GM12878 (cell line): ENCODE measurements at regions of chr2 and their contacts with region 1.

Region 1: GRCh38 chr2:218168635-218169462 is 2.1 kb upstream of the CXCR1 start:
- DNase-seq: no peak
- ATAC-seq: peak; percentile 98
- H3K4me3 ChIP-seq: no peak overlapping the region
- H3K27ac ChIP-seq: no peak overlapping the region
- H3K4me1 ChIP-seq: no peaks in the 10 kb centered on the region
- H3K27me3 ChIP-seq: no peaks in the 10 kb centered on the region; a peak in 3 of 4 replicates
- CTCF ChIP-seq: peak; percentile 58 to 86 (median 70)
- EP300 ChIP-seq: no peak
- POLR2A ChIP-seq: no peak
- RAD21 ChIP-seq: peak; percentile 57

Region 2: DNA sequence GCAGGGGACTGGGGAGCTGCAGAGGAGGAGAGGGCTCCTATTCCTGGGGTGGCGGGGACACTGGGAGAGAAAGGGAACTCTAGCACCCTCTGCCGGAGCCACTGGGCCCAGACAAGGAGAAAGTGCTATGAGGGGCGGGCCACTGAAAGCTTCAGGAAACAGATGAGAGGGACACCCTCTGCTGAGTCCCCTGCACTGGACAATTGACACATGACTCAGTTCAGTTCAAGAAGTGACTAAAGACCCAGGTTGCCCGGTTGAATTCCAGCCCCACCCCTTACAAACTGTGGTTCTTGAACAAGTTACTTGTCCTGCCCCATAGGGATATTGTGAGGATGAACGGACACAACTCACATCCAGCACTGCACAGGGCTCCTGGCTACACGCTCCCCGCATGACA is 94.8 kb before region 1 on chr2:
- CTCF ChIA-PET with region 1: no interaction called
- POLR2A ChIA-PET with region 1: no interaction called
- RAD21 ChIA-PET with region 1: no interaction called
- SMC1A ChIA-PET with region 1: no interaction called
- in situ Hi-C with region 1: no loop called
- intact Hi-C with region 1: loop called (anchors 5 kb)
- DNase-seq: no peak
- ATAC-seq: peak; percentile 62
- H3K4me3 ChIP-seq: no peak overlapping the region
- H3K27ac ChIP-seq: no peak overlapping the region
- H3K4me1 ChIP-seq: peaks cover 4% of the 10 kb centered on the region; the same call in 1 of the 2 replicates
- H3K27me3 ChIP-seq: no peaks in the 10 kb centered on the region
- CTCF ChIP-seq: peak; percentile 46 to 68 (median 60)
- EP300 ChIP-seq: no peak
- POLR2A ChIP-seq: no peak
- RAD21 ChIP-seq: peak; percentile 21; the same call in 1 of the 2 replicates

Region 3: GRCh38 chr2:218093879-218094278 is 75.0 kb before region 1 on chr2:
- CTCF ChIA-PET with region 1: no interaction called
- POLR2A ChIA-PET with region 1: no interaction called
- RAD21 ChIA-PET with region 1: no interaction called
- SMC1A ChIA-PET with region 1: no interaction called
- in situ Hi-C with region 1: no loop called
- intact Hi-C with region 1: no loop called
- DNase-seq: no peak
- ATAC-seq: no peak
- H3K4me3 ChIP-seq: no peak overlapping the region
- H3K27ac ChIP-seq: no peak overlapping the region
- H3K4me1 ChIP-seq: no peaks in the 10 kb centered on the region
- H3K27me3 ChIP-seq: no peaks in the 10 kb centered on the region; a peak in 1 of 4 replicates
- CTCF ChIP-seq: peak in 1 of 3 experiments; percentile 20; a peak in 1 of 6 replicates
- EP300 ChIP-seq: no peak
- POLR2A ChIP-seq: no peak
- RAD21 ChIP-seq: no peak

Region 4: DNA sequence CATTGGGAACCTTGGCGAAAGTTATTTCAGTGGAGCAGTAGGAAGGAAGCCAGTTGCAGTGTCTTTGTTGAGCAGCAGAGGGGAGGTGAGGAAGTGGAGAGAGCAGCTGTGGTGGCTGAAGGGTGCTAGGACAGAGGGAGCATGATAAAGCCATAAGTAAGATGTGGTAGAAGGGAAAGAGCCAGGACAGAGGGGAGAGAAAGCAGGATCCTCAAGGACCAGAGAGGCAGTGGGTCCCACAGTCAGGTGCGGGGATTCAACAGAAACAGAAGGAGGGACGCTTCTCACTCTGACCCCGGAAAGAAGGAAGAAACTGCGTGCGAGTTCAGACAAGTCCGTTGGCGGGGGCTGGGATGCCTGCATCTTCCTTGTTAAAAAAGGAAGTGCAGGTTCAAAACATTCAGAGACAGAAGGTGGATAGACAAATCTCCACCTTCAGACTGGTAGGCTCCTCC is 43.2 kb before region 1 on chr2 and contains the start of gene CXCR2:
- CTCF ChIA-PET with region 1: no interaction called
- POLR2A ChIA-PET with region 1: no interaction called
- RAD21 ChIA-PET with region 1: no interaction called
- SMC1A ChIA-PET with region 1: no interaction called
- in situ Hi-C with region 1: no loop called
- intact Hi-C with region 1: no loop called
- DNase-seq: no peak
- ATAC-seq: peak; percentile 54; the same call in 2 of the 3 replicates
- H3K4me3 ChIP-seq: no peak within 1 kb of the TSS
- H3K27ac ChIP-seq: no peak within 1 kb of the TSS
- H3K4me1 ChIP-seq: no peaks in the 10 kb centered on the region
- H3K27me3 ChIP-seq: 0 out of 4 replicates have a peak, but pooled peaks cover 0 to 2% of the 10 kb centered on the region in 2 experiments
- CTCF ChIP-seq: no peak
- EP300 ChIP-seq: no peak
- POLR2A ChIP-seq: no peak
- RAD21 ChIP-seq: no peak
- polyA plus RNA-seq, gene CXCR2: 0.04 to 0.27 TPM

Region 5: DNA sequence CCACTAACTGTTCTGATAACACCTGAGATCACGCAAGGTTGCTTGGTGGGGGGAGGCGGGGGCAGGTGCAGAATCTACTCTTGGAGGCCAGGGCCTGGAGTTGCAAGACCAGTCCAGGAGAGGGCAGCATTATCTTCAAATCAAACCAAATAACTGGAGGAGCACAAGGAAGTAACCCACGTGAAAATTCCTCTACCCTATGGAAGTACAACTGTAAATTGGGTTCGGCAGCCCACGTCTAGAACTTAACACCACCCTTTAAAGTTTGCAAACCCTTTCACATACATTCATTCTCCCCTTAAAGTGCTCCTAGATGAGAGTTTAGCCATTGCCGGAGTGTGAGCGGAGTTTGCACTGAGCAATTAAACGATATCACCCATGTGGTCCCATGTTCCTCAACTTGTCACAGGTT is 17.5 kb after region 1 on chr2:
- CTCF ChIA-PET with region 1: interaction called, 10 read pairs
- POLR2A ChIA-PET with region 1: no interaction called
- RAD21 ChIA-PET with region 1: no interaction called
- SMC1A ChIA-PET with region 1: interaction called, 5 read pairs
- in situ Hi-C with region 1: no loop called
- intact Hi-C with region 1: no loop called
- DNase-seq: peak; percentile 25
- ATAC-seq: peak; percentile 96
- H3K4me3 ChIP-seq: no peak overlapping the region
- H3K27ac ChIP-seq: no peak overlapping the region
- H3K4me1 ChIP-seq: no peaks in the 10 kb centered on the region
- H3K27me3 ChIP-seq: peaks cover 0 to 1% of the 10 kb centered on the region in 2 experiments; a peak in 3 of 4 replicates
- CTCF ChIP-seq: peak; percentile 82 to 86 (median 85)
- EP300 ChIP-seq: no peak
- POLR2A ChIP-seq: no peak
- RAD21 ChIP-seq: peak; percentile 78

Region 6: DNA sequence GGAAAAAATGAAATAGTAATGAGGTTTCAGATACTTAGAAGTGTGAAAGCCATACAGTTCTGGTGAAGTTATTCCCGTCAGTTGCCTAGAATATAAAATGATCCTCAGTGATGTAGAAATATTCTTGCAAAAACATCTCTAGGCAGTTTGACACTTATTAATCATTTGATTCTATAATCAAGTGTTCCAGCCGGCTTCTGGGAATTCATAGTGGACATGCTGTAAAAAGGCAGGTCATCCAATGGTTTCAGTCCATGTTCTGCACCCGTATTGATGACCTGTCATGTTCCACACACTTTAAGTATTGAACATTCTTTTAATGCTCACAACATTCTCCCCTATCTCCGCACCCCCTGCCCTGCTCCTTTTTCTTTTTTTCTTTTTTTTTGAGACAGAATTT is 68.0 kb after region 1 on chr2:
- CTCF ChIA-PET with region 1: no interaction called
- POLR2A ChIA-PET with region 1: no interaction called
- RAD21 ChIA-PET with region 1: no interaction called
- SMC1A ChIA-PET with region 1: no interaction called
- in situ Hi-C with region 1: no loop called
- intact Hi-C with region 1: no loop called
- DNase-seq: no peak
- ATAC-seq: no peak
- H3K4me3 ChIP-seq: no peak overlapping the region
- H3K27ac ChIP-seq: no peak overlapping the region
- H3K4me1 ChIP-seq: no peaks in the 10 kb centered on the region
- H3K27me3 ChIP-seq: no peaks in the 10 kb centered on the region
- CTCF ChIP-seq: no peak
- EP300 ChIP-seq: no peak
- POLR2A ChIP-seq: no peak
- RAD21 ChIP-seq: no peak

Region 7: GRCh38 chr2:218370410-218371063 is 201.7 kb after region 1 on chr2:
- CTCF ChIA-PET with region 1: no interaction called
- POLR2A ChIA-PET with region 1: no interaction called
- RAD21 ChIA-PET with region 1: no interaction called
- SMC1A ChIA-PET with region 1: no interaction called
- in situ Hi-C with region 1: no loop called
- intact Hi-C with region 1: no loop called
- DNase-seq: no peak
- ATAC-seq: no peak
- H3K4me3 ChIP-seq: no peak overlapping the region
- H3K27ac ChIP-seq: no peak overlapping the region
- H3K4me1 ChIP-seq: peaks cover 4% of the 10 kb centered on the region; the same call in 1 of the 2 replicates
- H3K27me3 ChIP-seq: no peaks in the 10 kb centered on the region
- CTCF ChIP-seq: no peak
- EP300 ChIP-seq: no peak
- POLR2A ChIP-seq: no peak
- RAD21 ChIP-seq: no peak